Pancreas (tissue), 10 donors: ENCODE measurements at regions of chr5 and their contacts with region 1.

Region 1: DNA sequence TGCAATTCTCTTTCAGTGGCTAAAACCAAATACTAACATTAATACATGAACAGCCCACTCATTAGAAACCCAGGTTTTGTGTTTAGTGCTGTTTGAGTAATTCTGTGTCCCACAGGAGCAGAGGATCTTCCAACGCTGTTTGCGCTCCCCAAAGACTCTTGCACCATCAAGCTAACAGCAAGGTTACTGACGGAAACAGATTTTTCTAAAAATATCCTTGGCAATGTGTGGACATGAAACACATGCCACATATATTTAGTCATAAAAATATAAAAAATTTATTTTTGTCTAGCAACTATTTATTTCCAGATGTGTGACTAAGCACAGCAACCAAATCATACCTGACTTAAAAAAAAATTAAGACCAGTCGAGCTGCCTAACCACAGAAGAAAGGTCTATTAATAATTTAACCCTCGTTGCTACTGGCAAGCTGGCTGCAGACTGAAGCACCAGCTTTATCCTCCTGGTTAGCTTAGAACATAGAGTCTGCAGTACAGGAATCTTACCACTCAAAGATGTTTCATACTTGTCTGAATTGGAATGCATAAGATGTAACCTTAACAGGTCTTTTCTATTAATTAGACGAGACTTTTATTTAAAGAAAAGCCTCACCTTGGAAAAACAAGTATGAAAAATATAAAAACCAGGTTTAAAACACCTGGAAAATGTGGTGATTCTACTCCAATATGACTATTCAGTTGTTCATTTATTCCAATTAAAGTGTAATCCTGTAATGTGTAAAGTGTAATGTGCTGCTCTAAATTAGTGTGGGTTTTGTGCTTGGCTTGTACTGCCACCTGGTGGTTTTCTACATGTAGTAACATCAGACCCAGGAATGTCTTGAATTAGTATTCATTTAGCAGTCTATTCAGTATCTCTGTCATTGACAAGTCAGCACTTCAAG is 272.5 kb downstream of the EPB41L4A start:
- DNase-seq: peak in 3 of 6 donors; percentile 30 to 60 (median 48)
- ATAC-seq: peak; percentile 89 to 98 (median 96)
- H3K4me3 ChIP-seq: no peak overlapping the region
- H3K27ac ChIP-seq: no peak overlapping the region
- H3K4me1 ChIP-seq: peaks cover 0 to 4% (median 0%) of the 10 kb centered on the region in 3 donors
- H3K27me3 ChIP-seq: no peaks in the 10 kb centered on the region
- CTCF ChIP-seq: peak; percentile 47 to 80 (median 65)

Region 2: DNA sequence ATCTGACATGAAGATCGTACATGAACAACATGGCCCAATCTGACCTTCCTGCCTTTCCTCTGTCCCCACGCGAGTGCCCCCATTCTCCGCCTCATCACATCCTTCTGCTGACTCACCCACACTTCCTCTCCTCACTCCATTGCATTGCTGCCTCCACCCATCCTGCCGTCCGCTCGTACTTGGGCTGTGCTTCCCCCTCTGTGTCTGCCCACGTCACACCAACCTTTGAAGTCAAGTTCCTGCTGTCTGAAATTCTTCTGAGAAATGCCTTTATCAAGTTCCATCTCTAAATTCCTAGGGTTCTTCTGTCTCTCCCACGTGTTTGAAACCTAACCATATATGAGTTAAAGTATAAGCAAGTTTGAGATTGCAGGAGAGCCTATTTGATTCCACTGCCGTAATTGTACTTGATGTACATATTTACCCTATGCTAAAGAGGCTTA is 616.3 kb before region 1 on chr5:
- intact Hi-C with region 1: loop called in 2 of 3 experiments (anchors 5 kb)
- DNase-seq: peak in 2 of 6 donors; percentile 36 to 54
- ATAC-seq: peak in 3 of 4 donors; percentile 57 to 89 (median 78)
- H3K4me3 ChIP-seq: no peak overlapping the region
- H3K27ac ChIP-seq: no peak overlapping the region
- H3K4me1 ChIP-seq: no peaks in the 10 kb centered on the region
- H3K27me3 ChIP-seq: no peaks in the 10 kb centered on the region
- CTCF ChIP-seq: no peak

Region 3: GRCh38 chr5:111942661-111943401 is 203.7 kb before region 1 on chr5:
- intact Hi-C with region 1: no loop called
- DNase-seq: no peak
- ATAC-seq: no peak
- H3K4me3 ChIP-seq: no peak overlapping the region
- H3K27ac ChIP-seq: no peak overlapping the region
- H3K4me1 ChIP-seq: no peaks in the 10 kb centered on the region
- H3K27me3 ChIP-seq: no peaks in the 10 kb centered on the region
- CTCF ChIP-seq: no peak

Region 4: DNA sequence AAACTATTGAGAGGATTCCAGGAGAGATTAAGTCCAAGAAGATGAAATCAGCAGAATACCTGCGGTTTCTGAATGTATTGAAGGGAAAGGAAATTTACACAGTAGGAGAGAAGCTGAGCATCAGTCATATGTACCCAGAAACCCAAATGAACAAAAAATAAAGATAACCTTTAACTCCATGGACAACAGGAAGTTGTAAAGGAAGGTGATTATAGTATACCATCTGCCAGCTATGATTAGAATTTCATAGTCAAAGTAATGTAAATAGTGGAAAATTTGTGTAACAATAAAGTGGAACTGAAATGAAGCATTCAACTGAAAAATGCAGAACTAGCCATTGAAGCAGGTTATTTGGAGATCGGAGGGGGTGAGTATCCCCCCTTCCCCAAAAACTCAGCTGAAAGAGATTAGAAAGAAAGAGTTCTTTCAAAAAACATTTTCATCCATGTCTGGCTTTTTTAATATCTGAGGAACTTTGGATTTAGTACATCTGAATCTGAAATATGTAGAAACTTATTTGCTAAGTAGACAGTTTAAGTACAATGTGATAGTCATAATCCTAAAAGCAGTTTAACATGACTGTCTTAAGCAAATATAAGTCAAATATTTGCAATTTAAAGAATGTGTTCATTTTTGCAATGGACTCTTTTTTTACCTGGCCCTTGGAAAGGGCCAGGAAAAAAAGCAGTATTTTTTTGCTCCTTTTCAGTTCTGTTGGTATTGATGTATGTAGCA is 649.5 kb after region 1 on chr5:
- intact Hi-C with region 1: no loop called
- DNase-seq: no peak
- ATAC-seq: no peak
- H3K4me3 ChIP-seq: no peak overlapping the region
- H3K27ac ChIP-seq: no peak overlapping the region
- H3K4me1 ChIP-seq: no peaks in the 10 kb centered on the region
- H3K27me3 ChIP-seq: no peaks in the 10 kb centered on the region
- CTCF ChIP-seq: no peak